GM23248 (cell line): ENCODE measurements at regions of chr12 and their contacts with region 1.

Region 1: GRCh38 chr12:11705010-11705409 is 55.5 kb downstream of the ETV6 start:
- DNase-seq: peak; percentile 96
- H3K4me3 ChIP-seq: no peak overlapping the region
- H3K27ac ChIP-seq: peak overlapping the region; percentile 79
- H3K4me1 ChIP-seq: peaks cover 19% of the 10 kb centered on the region
- H3K27me3 ChIP-seq: no peaks in the 10 kb centered on the region

Region 2: GRCh38 chr12:11648831-11649702 is 55.9 kb before region 1 on chr12 and contains the start of gene ETV6:
- in situ Hi-C with region 1: loop called (anchors 10 kb)
- DNase-seq: peak; percentile 95
- H3K4me3 ChIP-seq: peak within 1 kb of the TSS; percentile 100
- H3K27ac ChIP-seq: peak within 1 kb of the TSS; percentile 96
- H3K4me1 ChIP-seq: peaks cover 22% of the 10 kb centered on the region
- H3K27me3 ChIP-seq: no peaks in the 10 kb centered on the region
- total RNA-seq, gene ETV6: 5.3 and 10.4 TPM in 2 replicates

Region 3: DNA sequence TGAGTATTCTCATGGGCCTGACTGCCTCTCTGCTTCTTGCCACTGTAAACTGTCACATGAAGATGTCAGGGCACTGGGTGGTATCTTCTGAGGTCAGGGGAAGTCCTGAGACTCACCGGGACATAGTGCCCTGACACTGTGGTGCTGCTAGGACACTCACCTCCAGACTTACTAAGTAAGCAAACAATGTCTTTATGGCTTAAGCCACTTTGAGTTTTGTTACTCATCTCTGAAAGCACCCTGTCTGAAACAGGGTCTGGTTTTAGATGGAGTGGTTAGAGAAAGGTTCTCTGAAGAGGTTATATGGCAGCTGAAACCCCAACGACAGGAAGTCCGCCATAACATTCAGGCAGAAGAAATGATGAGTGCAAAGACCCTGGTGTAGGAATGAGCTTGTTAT is 968.3 kb after region 1 on chr12:
- in situ Hi-C with region 1: no loop called
- DNase-seq: no peak
- H3K4me3 ChIP-seq: no peak overlapping the region
- H3K27ac ChIP-seq: no peak overlapping the region
- H3K4me1 ChIP-seq: peaks cover 19% of the 10 kb centered on the region
- H3K27me3 ChIP-seq: no peaks in the 10 kb centered on the region